ENCODE measurements at regions of chr10 and their contacts with region 1.

Region 1: DNA sequence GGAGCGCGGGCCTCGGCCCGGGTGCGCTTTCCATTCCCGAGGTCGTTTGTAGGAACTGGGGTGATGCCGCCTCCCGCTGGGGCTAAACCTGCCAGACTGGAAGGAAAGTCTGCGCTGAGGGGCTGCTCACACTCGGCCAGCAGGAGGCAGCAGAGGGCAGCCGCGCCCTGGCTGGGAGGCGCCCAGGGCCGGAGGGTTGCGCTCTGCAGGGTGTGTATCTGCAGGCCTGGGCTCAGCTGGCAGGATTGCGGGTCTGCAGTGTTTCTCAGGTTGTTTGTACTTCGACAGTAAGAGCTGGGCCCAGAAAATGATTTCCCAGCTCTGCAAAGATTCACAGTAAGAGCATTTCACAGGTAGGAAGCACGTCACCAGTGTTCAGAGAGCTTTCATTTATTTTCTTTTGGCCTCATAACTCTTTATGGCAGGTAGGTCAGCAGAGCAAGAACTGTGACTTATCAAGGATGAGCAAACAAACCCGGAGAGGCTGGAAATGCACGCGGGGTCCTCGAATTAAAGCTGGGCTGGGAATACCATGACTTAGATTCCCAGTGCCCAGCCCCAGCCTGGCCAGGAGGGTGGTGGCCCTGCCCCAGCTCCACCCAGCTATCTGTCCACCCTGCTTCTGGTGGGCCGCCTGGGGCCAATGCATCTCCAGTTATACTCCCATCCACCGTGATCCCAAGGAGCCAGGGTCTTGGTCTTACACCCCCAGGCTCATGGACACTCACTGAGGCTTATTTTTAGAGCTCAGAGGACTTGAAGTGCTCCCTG is 15.2 kb upstream of the PPP2R2D start:
- DNase-seq: peak; percentile 68 to 83 (median 78)
- H3K4me3 ChIP-seq: no peak overlapping the region
- H3K4me3 Mint-ChIP-seq: no peak overlapping the region
- H3K27ac ChIP-seq: no peak overlapping the region
- H3K27ac Mint-ChIP-seq: peak overlapping the region in 2 of 7 donors; percentile 33 to 46
- H3K4me1 ChIP-seq: peaks cover 4% of the 10 kb centered on the region
- H3K4me1 Mint-ChIP-seq: peaks cover 0 to 5% (median 3%) of the 10 kb centered on the region in 4 donors
- H3K27me3 ChIP-seq: no peaks in the 10 kb centered on the region
- H3K27me3 Mint-ChIP-seq: peaks cover 6 to 11% of the 10 kb centered on the region in 2 donors

Region 2: GRCh38 chr10:131943021-131943814 is 57.6 kb after region 1 on chr10:
- CTCF ChIA-PET with region 1: interaction called, 18 read pairs
- POLR2A ChIA-PET with region 1: no interaction called
- intact Hi-C with region 1: loop called (anchors 1 kb)
- DNase-seq: peak in 2 of 5 donors; percentile 5 to 15
- H3K4me3 ChIP-seq: no peak overlapping the region
- H3K4me3 Mint-ChIP-seq: no peak overlapping the region
- H3K27ac ChIP-seq: no peak overlapping the region
- H3K27ac Mint-ChIP-seq: peak overlapping the region in 5 of 7 donors; percentile 8 to 78 (median 52)
- H3K4me1 ChIP-seq: no peaks in the 10 kb centered on the region
- H3K4me1 Mint-ChIP-seq: peaks cover 0 to 3% (median under 1%) of the 10 kb centered on the region in 4 donors
- H3K27me3 ChIP-seq: no peaks in the 10 kb centered on the region
- H3K27me3 Mint-ChIP-seq: no peaks in the 10 kb centered on the region

Region 3: DNA sequence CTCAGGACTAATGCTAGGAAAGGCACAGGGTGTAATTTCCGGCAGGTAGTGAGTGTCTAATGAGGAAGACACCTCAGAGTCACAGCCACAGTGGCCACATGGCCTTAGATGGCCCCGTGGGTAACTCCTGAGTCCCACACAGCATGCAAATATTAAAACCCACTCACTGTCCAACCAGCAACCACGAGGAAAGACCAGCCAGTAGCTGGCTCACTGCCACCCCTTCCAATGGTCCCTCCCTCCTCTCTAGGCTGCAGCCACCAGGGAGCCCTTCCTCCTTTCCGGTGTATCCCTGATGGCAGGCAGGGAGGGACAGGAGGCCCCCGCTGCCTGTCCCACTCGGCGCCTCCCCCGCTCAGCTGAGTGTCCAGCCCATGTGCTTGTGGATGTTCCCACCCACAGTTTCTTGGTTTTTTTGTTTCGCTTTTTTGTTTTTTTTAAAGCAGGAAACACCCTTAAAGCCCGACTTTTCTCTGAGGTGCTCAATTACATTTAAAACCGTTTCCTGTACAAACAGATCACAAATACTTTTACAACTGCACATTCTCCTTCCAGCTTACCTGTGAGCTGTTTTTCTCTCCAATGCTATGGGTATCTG is 87.0 kb after region 1 on chr10:
- CTCF ChIA-PET with region 1: interaction called, 10 read pairs
- POLR2A ChIA-PET with region 1: no interaction called
- intact Hi-C with region 1: no loop called
- DNase-seq: peak; percentile 58 to 65 (median 63)
- H3K4me3 ChIP-seq: peak overlapping the region; percentile 14 to 56
- H3K4me3 Mint-ChIP-seq: peak overlapping the region; percentile 77 to 93 (median 86)
- H3K27ac ChIP-seq: peak overlapping the region; percentile 49
- H3K27ac Mint-ChIP-seq: peak overlapping the region; percentile 80 to 95 (median 89)
- H3K4me1 ChIP-seq: peaks cover 57% of the 10 kb centered on the region
- H3K4me1 Mint-ChIP-seq: peaks cover 45 to 74% (median 60%) of the 10 kb centered on the region in 4 donors
- H3K27me3 ChIP-seq: no peaks in the 10 kb centered on the region
- H3K27me3 Mint-ChIP-seq: no peaks in the 10 kb centered on the region

Region 4: GRCh38 chr10:132011024-132011423 is 125.4 kb after region 1 on chr10:
- CTCF ChIA-PET with region 1: interaction called, 11 read pairs
- POLR2A ChIA-PET with region 1: no interaction called
- intact Hi-C with region 1: no loop called
- DNase-seq: no peak
- H3K4me3 ChIP-seq: no peak overlapping the region
- H3K4me3 Mint-ChIP-seq: no peak overlapping the region
- H3K27ac ChIP-seq: no peak overlapping the region
- H3K27ac Mint-ChIP-seq: no peak overlapping the region
- H3K4me1 ChIP-seq: no peaks in the 10 kb centered on the region
- H3K4me1 Mint-ChIP-seq: no peaks in the 10 kb centered on the region
- H3K27me3 ChIP-seq: no peaks in the 10 kb centered on the region
- H3K27me3 Mint-ChIP-seq: peaks cover 7 to 19% of the 10 kb centered on the region in 2 donors

Region 5: DNA sequence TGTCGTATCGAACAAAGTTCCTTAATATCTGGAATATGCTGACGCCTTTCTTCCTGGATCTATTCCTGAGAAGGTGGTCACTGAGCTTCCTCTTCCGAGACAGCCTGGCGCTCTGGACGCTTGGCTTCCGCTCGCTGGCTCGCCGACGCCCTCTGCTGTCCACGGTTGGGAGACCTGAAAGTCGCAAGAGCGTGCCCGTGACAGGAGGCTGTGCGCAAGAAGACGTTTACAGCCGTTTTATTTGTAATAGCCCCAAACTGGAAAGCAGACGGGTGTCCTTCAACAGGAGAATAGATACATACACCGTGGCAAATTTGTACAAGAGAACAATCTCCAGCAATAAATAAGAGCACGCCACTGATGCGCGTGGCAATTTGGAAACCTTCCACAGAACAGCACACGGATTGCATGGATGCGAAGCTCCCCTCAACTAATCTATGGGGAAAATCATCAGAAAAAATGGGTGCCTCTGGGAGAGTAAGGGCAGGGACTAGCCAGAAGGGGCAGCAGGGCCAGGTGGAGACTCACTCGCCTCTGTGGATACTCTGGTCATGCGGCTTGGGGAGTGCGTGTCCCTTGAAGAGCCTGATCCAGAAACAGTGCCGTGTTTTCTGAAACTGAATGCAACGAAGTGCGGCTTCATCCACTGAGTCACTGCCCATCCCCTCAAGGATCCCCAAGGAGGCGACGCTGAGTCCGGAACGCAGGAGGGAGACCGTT is 137.7 kb after region 1 on chr10:
- CTCF ChIA-PET with region 1: interaction called, 119 read pairs
- POLR2A ChIA-PET with region 1: interaction called, 8 read pairs
- intact Hi-C with region 1: no loop called
- DNase-seq: peak; percentile 59 to 74 (median 64)
- H3K4me3 ChIP-seq: no peak overlapping the region
- H3K4me3 Mint-ChIP-seq: peak overlapping the region in 4 of 8 donors; percentile 1 to 56 (median 36)
- H3K27ac ChIP-seq: no peak overlapping the region
- H3K27ac Mint-ChIP-seq: peak overlapping the region in 1 of 7 donors; percentile 59
- H3K4me1 ChIP-seq: peaks cover 9% of the 10 kb centered on the region
- H3K4me1 Mint-ChIP-seq: peaks cover 4 to 10% (median 6%) of the 10 kb centered on the region in 4 donors
- H3K27me3 ChIP-seq: peaks cover under 1% of the 10 kb centered on the region
- H3K27me3 Mint-ChIP-seq: peaks cover 18 to 31% of the 10 kb centered on the region in 2 donors

Region 6: GRCh38 chr10:132142411-132143161 is 257.0 kb after region 1 on chr10:
- CTCF ChIA-PET with region 1: interaction called, 15 read pairs
- POLR2A ChIA-PET with region 1: no interaction called
- intact Hi-C with region 1: no loop called
- DNase-seq: peak in 4 of 5 donors; percentile 25 to 55 (median 44)
- H3K4me3 ChIP-seq: no peak overlapping the region
- H3K4me3 Mint-ChIP-seq: no peak overlapping the region
- H3K27ac ChIP-seq: no peak overlapping the region
- H3K27ac Mint-ChIP-seq: no peak overlapping the region
- H3K4me1 ChIP-seq: no peaks in the 10 kb centered on the region
- H3K4me1 Mint-ChIP-seq: no peaks in the 10 kb centered on the region
- H3K27me3 ChIP-seq: no peaks in the 10 kb centered on the region
- H3K27me3 Mint-ChIP-seq: peaks cover 0 to 2% of the 10 kb centered on the region in 2 donors

Region 7: DNA sequence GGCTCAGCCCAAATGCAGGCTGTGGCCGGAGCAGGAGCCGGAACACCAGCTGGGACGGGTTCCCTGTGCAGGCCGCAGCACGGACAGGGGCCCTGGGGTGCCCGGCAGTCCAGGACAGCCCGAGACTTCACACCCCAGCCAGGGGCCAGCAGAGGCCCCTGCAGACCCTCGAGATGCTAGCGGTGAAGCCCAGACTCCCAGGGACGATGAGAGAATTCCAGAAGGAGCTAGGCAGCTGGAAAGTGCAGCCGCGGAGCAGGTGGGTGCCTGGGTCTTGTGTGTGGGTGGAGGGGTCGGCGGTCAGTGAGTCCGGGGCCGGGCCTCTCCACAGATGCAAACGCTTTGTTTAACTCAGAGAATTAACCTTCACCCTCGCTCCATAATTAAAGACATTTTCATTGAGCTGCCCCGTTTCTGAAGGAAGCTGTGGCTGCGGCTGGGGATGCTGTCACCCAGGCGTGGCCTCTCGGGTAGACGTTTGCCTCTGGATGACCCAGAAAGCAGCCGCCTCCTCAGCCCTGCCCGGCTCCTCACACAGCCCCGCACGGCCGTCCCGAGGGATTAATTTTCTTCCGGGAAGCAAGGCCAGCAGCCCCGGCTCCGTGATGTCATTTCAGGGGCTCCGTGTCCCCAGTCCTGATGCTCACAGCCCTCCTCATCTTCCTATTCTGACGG is 1301.0 kb after region 1 on chr10:
- CTCF ChIA-PET with region 1: no interaction called
- POLR2A ChIA-PET with region 1: no interaction called
- intact Hi-C with region 1: no loop called
- DNase-seq: no peak
- H3K4me3 ChIP-seq: no peak overlapping the region
- H3K4me3 Mint-ChIP-seq: no peak overlapping the region
- H3K27ac ChIP-seq: no peak overlapping the region
- H3K27ac Mint-ChIP-seq: no peak overlapping the region
- H3K4me1 ChIP-seq: no peaks in the 10 kb centered on the region
- H3K4me1 Mint-ChIP-seq: no peaks in the 10 kb centered on the region
- H3K27me3 ChIP-seq: no peaks in the 10 kb centered on the region
- H3K27me3 Mint-ChIP-seq: no peaks in the 10 kb centered on the region